ENCODE measurements at regions of chr10 and their contacts with region 1.

Region 1: DNA sequence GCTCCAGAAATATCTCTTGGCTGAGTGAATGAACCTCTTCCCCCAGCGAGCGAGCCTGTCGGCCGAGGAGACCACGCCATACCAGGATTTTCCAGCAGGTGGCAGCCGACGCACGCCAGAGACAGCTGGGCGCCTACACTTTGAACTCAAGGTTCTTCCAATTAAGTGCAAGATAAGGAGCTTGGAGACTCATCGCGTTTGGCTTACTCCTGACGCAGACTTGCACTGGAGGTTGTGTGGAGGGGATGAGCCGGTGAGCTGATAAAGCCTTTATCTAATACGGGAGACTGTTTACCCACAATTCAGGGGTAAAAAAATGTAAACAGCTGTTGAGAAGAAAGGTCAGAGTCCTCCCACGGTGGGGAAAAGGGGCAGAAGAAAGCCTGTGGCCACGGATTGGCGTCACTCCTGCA is 45.9 kb upstream of the EMX2 start:
- DNase-seq: peak; percentile 60
- ATAC-seq: peak; percentile 75
- H3K4me3 ChIP-seq: peak overlapping the region in 1 of 3 experiments; percentile 17; a peak in 1 of 6 replicates
- H3K27ac ChIP-seq: peak overlapping the region; percentile 21
- H3K4me1 ChIP-seq: peaks cover 28% of the 10 kb centered on the region
- H3K27me3 ChIP-seq: 0 out of 5 replicates have a peak, but pooled peaks cover 0 to 5% of the 10 kb centered on the region in 2 experiments
- CTCF ChIP-seq: peak; percentile 91
- EP300 ChIP-seq: no peak; a peak in 2 of 4 replicates
- POLR2A ChIP-seq: no peak
- RAD21 ChIP-seq: peak; percentile 70

Region 2: DNA sequence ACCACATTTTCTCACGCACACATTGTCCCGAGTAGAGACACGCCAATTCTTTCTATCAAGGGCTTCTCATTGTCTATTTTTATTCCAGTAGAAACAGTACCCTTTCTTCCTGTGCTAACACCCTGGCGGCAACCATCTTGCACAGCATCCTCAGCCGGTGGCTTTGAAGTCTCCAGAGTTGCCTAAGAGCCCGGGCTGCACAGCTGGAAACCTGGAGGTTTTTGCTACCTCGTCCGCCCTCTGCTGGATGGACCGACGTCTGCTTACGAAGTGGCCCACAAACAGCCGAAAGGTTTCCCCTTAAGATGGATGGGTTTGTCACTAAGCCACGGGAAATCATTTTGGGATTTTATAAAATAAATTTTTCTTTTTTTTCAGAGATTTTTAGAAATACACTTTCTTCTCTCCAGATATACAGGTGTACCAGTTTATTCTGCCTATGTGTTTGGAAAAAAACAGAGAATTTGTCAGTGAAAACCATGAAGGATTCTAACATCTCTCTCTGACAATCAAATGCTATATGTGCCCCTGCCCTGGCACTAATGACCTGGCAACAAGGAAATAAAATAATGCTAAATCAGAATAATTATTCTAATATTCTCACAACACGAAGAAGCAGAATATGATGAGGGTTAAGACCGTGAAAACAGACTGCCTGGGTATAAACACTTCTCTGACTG is 927.3 kb after region 1 on chr10:
- CTCF ChIA-PET with region 1: interaction called, 5 read pairs
- POLR2A ChIA-PET with region 1: no interaction called
- in situ Hi-C with region 1: loop called (anchors 25 kb)
- intact Hi-C with region 1: loop called (anchors 5 kb)
- DNase-seq: peak; percentile 89
- ATAC-seq: peak; percentile 100
- H3K4me3 ChIP-seq: no peak overlapping the region
- H3K27ac ChIP-seq: no peak overlapping the region
- H3K4me1 ChIP-seq: no peaks in the 10 kb centered on the region
- H3K27me3 ChIP-seq: peaks cover 0 to 5% of the 10 kb centered on the region in 2 experiments; a peak in 1 of 5 replicates
- CTCF ChIP-seq: peak; percentile 81
- EP300 ChIP-seq: no peak
- POLR2A ChIP-seq: no peak
- RAD21 ChIP-seq: peak; percentile 70

Region 3: GRCh38 chr10:118447478-118448270 is 951.1 kb after region 1 on chr10:
- CTCF ChIA-PET with region 1: no interaction called
- POLR2A ChIA-PET with region 1: no interaction called
- in situ Hi-C with region 1: loop called (anchors 25 kb)
- intact Hi-C with region 1: no loop called
- DNase-seq: no peak
- ATAC-seq: no peak
- H3K4me3 ChIP-seq: no peak overlapping the region
- H3K27ac ChIP-seq: no peak overlapping the region
- H3K4me1 ChIP-seq: no peaks in the 10 kb centered on the region
- H3K27me3 ChIP-seq: peaks cover 0 to 34% of the 10 kb centered on the region in 2 experiments; a peak in 2 of 5 replicates
- CTCF ChIP-seq: no peak
- EP300 ChIP-seq: no peak
- POLR2A ChIP-seq: no peak
- RAD21 ChIP-seq: no peak